ENCODE measurements at regions of chr6 and their contacts with region 1.

Region 1: DNA sequence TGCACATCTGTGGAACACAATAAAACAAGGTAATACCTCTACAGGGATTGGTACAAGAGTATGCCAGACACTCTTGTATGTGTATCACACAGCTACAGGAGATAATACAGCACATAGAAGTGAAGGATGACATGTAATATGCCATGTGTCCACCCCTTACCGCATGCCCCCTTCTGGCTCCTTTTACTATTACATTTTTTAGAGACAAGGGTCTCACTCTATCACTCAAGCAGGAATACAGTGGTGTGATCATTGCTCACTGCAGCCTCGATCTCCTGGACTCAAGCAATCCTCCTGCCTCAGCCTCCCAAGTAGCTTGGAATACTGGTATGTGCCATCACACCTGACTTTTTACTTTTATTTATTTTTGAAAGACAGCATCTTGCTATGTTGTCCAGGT is 4.2 kb upstream of the NCR3 start:
- DNase-seq: no peak
- H3K4me3 Mint-ChIP-seq: no peak overlapping the region
- H3K27ac Mint-ChIP-seq: no peak overlapping the region
- H3K4me1 Mint-ChIP-seq: peaks cover 29% of the 10 kb centered on the region
- H3K27me3 Mint-ChIP-seq: no peaks in the 10 kb centered on the region

Region 2: DNA sequence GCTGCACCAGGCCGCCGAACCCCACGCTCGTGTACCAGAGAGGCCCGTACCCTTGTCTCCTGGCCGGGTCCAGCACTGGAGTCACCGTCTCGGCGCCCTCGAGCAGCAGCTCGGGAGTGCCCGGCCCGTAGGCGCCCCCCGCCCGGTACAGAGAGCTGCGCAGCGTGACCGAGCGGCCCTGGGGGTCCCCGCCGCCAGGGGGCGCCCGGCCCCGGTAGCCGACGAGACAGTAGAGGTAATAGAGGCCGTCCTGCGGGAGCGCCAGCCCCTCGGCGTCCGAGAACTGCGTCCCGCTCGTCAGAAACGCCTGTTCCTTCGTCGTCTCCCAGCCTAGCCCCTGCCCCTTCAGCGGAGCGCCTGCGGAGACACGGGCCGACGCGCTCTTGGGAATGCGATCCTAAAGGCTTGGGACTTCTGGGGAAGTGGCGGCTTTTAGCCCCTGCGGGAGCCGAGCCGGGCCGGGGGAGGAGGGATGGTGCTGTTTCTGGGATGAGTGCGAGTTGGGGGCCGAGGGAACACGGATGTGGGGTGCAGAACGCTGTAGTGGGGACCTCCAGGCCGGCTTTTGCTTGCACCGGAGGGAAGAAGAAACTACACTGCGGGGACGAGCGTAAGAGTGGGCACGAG is 16.1 kb before region 1 on chr6:
- intact Hi-C with region 1: loop called (anchors 1 kb)
- DNase-seq: peak; percentile 80
- H3K4me3 Mint-ChIP-seq: peak overlapping the region; percentile 97
- H3K27ac Mint-ChIP-seq: peak overlapping the region; percentile 89
- H3K4me1 Mint-ChIP-seq: peaks cover 57% of the 10 kb centered on the region
- H3K27me3 Mint-ChIP-seq: no peaks in the 10 kb centered on the region